ENCODE measurements at regions of chr7 and their contacts with region 1.

Region 1: DNA sequence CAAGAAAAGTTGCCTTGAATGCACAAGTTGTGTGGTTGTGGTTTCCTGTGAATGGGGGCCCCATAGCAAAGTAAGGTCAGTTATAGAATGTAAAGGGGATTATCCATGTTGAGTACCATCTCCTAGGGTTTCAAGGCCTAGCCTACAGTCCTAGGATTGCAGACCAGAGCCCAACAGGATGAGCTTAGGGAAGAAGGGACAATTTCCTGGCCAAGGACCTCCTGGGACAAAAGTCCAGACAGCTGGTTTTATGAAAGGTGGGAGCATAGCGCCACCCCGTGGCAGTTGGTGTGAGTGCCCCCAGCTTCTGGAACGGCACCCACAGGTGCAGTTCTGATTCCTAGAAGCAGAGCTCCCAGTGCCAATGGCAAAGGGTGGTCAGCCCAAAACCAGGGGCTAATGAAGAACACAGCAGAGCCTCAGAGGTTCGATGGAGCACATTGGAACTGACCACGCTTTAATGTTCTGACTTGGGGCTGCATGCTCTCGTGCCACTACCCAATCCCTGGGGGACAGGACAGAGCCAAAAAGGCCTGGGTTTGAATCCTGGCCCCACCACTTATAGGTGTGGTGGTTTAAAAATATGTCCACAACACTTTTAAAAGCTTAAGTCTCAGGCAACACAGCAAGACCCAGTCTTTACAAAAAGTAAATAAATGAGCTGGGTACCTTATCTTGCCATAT is 25.8 kb upstream of the TMEM120A start:
- DNase-seq: peak; percentile 39 to 82 (median 72)
- ATAC-seq: peak; percentile 68
- H3K4me3 ChIP-seq: no peak overlapping the region
- H3K4me3 Mint-ChIP-seq: no peak overlapping the region
- H3K27ac ChIP-seq: no peak overlapping the region
- H3K27ac Mint-ChIP-seq: no peak overlapping the region
- H3K4me1 ChIP-seq: peaks cover 8% of the 10 kb centered on the region
- H3K4me1 Mint-ChIP-seq: peaks cover 10% of the 10 kb centered on the region
- H3K27me3 ChIP-seq: no peaks in the 10 kb centered on the region
- H3K27me3 Mint-ChIP-seq: no peaks in the 10 kb centered on the region
- CTCF ChIP-seq: peak; percentile 85

Region 2: GRCh38 chr7:75611548-75612178 is 408.5 kb before region 1 on chr7:
- CTCF ChIA-PET with region 1: no interaction called
- POLR2A ChIA-PET with region 1: no interaction called
- intact Hi-C with region 1: no loop called
- DNase-seq: no peak
- ATAC-seq: no peak
- H3K4me3 ChIP-seq: no peak overlapping the region
- H3K4me3 Mint-ChIP-seq: no peak overlapping the region
- H3K27ac ChIP-seq: no peak overlapping the region
- H3K27ac Mint-ChIP-seq: no peak overlapping the region
- H3K4me1 ChIP-seq: no peaks in the 10 kb centered on the region
- H3K4me1 Mint-ChIP-seq: peaks cover 2% of the 10 kb centered on the region
- H3K27me3 ChIP-seq: no peaks in the 10 kb centered on the region
- H3K27me3 Mint-ChIP-seq: no peaks in the 10 kb centered on the region
- CTCF ChIP-seq: no peak

Region 3: DNA sequence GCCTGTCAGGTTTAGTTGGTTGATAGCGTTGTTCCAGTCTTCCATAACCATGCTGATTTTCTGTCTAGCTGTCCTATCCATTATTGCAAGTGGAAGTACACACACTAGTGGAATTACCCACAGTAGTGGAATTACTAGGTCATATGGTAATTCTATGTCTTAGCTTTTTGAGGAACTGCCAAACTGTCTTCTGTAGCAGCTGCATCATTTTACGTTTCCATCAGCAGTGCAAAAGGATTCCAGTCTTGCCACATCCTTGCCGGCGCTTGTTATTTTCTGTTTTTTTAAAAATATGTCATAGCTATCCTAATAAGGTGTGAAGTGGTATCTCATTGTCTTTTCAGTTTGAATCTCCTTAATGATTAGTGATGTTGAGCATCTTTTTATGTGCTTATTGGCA is 158.5 kb before region 1 on chr7:
- CTCF ChIA-PET with region 1: interaction called, 116 read pairs
- POLR2A ChIA-PET with region 1: no interaction called
- intact Hi-C with region 1: loop called in 1 of 2 experiments (anchors 1 kb)
- DNase-seq: no peak
- ATAC-seq: no peak
- H3K4me3 ChIP-seq: no peak overlapping the region
- H3K4me3 Mint-ChIP-seq: no peak overlapping the region
- H3K27ac ChIP-seq: no peak overlapping the region
- H3K27ac Mint-ChIP-seq: no peak overlapping the region
- H3K4me1 ChIP-seq: no peaks in the 10 kb centered on the region
- H3K4me1 Mint-ChIP-seq: peaks cover 4% of the 10 kb centered on the region
- H3K27me3 ChIP-seq: peaks cover 0 to 3% of the 10 kb centered on the region in 2 experiments
- H3K27me3 Mint-ChIP-seq: peaks cover 12% of the 10 kb centered on the region
- CTCF ChIP-seq: no peak

Region 4: DNA sequence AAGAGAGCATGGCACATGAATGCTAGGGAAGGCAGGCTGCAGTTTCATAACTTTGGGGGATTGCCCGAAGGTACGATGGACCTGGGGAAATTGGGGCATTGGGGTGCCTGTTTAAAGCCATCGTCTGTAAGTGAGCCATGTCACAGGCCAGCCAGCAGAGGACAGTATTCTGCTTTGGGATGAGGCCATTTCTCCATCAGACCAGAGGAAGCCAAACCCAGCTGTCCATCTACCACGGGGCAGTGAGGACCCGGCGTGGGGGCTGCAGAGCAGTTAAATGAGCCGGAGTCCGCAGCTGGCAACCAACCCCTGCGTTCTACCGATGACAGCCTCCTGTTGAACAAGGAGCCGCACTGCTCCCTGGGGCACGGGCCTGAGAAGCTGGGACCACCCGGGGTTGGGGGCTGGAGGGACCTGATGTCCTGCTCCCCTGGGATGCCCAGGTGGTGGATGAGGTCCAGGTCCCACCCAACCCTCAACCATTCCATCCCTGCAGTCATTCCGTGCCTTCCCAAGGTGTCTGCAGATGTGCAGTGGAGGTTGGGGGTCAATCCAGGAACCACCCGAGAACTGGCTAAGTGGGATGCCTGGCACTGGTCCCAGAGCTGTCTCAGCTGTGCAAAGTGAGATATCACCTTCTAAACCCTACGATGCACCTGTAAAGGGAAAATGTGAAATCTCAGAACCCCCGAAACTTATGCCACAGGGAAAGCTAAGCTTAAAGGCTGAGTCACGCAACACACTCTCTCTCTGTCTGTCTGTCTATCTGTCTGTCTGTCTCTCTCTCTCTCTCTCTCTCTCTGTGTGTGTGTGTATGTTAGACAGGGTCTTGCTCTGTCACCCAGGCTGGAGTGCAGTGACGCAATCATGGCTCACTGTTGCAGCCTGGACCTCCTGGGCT is 153.4 kb before region 1 on chr7:
- CTCF ChIA-PET with region 1: interaction called, 116 read pairs
- POLR2A ChIA-PET with region 1: no interaction called
- intact Hi-C with region 1: loop called in 1 of 2 experiments (anchors 1 kb)
- DNase-seq: peak in 8 of 9 experiments; percentile 20 to 73 (median 44)
- ATAC-seq: peak; percentile 85
- H3K4me3 ChIP-seq: no peak overlapping the region
- H3K4me3 Mint-ChIP-seq: no peak overlapping the region
- H3K27ac ChIP-seq: no peak overlapping the region
- H3K27ac Mint-ChIP-seq: no peak overlapping the region
- H3K4me1 ChIP-seq: no peaks in the 10 kb centered on the region
- H3K4me1 Mint-ChIP-seq: peaks cover 8% of the 10 kb centered on the region
- H3K27me3 ChIP-seq: peaks cover 0 to 3% of the 10 kb centered on the region in 2 experiments
- H3K27me3 Mint-ChIP-seq: peaks cover 16% of the 10 kb centered on the region
- CTCF ChIP-seq: peak; percentile 62

Region 5: DNA sequence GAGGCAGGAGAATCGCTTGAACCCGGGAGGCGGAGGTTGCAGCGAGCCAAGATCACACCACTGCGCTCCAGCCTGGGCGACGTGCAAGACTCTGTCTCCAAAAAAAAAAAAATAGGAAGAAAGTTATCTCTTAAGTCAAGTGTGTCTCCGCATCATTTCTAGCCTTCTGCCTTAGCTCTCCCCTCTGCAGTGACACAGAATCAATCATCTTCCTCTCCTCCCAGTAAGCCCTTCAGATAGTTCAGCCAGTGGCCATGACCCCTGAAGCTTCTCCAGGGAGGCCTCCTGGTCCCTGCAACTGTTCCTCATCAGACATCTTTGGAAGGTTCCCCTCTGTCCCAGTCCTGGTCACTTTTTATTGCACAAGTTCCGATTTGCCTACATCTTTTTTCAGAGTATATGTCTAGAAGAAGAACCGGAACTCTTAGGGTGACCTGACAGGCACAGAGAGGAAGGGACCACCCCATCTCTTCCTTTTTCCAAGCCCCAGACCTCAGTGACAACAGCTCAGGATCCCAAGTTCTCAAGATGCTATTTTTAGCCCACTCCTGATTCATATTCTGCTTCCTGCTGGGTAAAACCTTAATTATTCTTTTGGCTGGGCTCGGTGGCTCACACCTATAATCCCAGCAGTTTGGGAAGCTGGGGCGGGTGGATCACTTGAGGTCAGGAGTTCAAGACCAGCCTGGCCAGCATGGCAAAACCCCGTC is 147.9 kb before region 1 on chr7:
- CTCF ChIA-PET with region 1: interaction called, 116 read pairs
- POLR2A ChIA-PET with region 1: no interaction called
- intact Hi-C with region 1: no loop called
- DNase-seq: no peak
- ATAC-seq: no peak
- H3K4me3 ChIP-seq: no peak overlapping the region
- H3K4me3 Mint-ChIP-seq: no peak overlapping the region
- H3K27ac ChIP-seq: no peak overlapping the region
- H3K27ac Mint-ChIP-seq: no peak overlapping the region
- H3K4me1 ChIP-seq: no peaks in the 10 kb centered on the region
- H3K4me1 Mint-ChIP-seq: peaks cover 4% of the 10 kb centered on the region
- H3K27me3 ChIP-seq: no peaks in the 10 kb centered on the region
- H3K27me3 Mint-ChIP-seq: peaks cover 1% of the 10 kb centered on the region
- CTCF ChIP-seq: no peak

Region 6: GRCh38 chr7:75971961-75972763 is 48.0 kb before region 1 on chr7:
- CTCF ChIA-PET with region 1: no interaction called
- POLR2A ChIA-PET with region 1: no interaction called
- intact Hi-C with region 1: loop called in 1 of 2 experiments (anchors 5 kb)
- DNase-seq: no peak
- ATAC-seq: no peak
- H3K4me3 ChIP-seq: no peak overlapping the region
- H3K4me3 Mint-ChIP-seq: no peak overlapping the region
- H3K27ac ChIP-seq: no peak overlapping the region
- H3K27ac Mint-ChIP-seq: no peak overlapping the region
- H3K4me1 ChIP-seq: no peaks in the 10 kb centered on the region
- H3K4me1 Mint-ChIP-seq: no peaks in the 10 kb centered on the region
- H3K27me3 ChIP-seq: no peaks in the 10 kb centered on the region
- H3K27me3 Mint-ChIP-seq: no peaks in the 10 kb centered on the region
- CTCF ChIP-seq: no peak

Region 7: GRCh38 chr7:76149847-76150691 is 129.9 kb after region 1 on chr7:
- CTCF ChIA-PET with region 1: no interaction called
- POLR2A ChIA-PET with region 1: no interaction called
- intact Hi-C with region 1: no loop called
- DNase-seq: peak in 1 of 9 experiments; percentile 40
- ATAC-seq: no peak
- H3K4me3 ChIP-seq: peak overlapping the region in 1 of 2 experiments; percentile 19
- H3K4me3 Mint-ChIP-seq: peak overlapping the region; percentile 18
- H3K27ac ChIP-seq: no peak overlapping the region
- H3K27ac Mint-ChIP-seq: no peak overlapping the region
- H3K4me1 ChIP-seq: peaks cover 41% of the 10 kb centered on the region
- H3K4me1 Mint-ChIP-seq: peaks cover 23% of the 10 kb centered on the region
- H3K27me3 ChIP-seq: no peaks in the 10 kb centered on the region
- H3K27me3 Mint-ChIP-seq: no peaks in the 10 kb centered on the region
- CTCF ChIP-seq: no peak